A549 (cell line): ENCODE measurements at regions of chr1 and their contacts with region 1.

Region 1: DNA sequence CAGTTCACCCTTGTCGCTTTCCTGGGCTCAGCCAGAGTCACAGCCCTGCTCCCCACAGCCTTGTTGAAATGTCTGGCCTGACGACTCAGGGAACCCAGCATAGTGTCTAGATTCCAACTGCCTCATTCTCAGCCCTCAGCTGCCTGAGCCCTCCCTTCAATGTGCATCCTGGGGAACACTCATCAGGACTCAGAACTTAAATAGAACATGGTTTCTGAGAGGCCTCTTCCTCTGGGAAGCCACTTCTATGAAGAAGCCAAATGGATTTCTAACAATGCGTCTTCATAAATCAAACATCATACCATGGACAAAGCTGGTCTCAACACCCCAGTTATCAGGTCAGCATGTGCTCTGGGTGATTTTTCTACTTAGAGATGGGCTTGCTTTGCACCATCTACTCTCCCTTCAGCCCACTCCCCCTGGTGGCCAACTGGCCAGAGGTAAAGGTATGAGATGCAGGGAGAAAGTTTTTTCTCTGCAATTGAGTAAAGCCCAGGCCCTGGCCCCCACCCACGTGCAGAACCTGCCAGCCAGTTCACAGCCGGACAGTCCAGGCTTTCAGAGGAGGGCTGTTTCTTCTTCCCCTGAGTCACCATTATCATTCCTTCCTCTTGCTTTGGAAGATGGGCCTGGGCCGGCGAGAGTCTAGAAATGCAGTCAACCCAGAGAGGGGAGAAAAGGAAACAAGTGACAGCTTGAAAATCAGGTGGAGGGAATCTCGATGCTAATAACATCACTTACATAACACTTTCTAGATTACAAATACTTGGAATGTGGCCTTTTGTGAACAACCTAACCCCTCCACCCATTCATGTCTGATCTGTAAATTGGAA is 32.1 kb downstream of the CD244 start:
- DNase-seq: peak; percentile 47 to 73
- ATAC-seq: peak; percentile 86 to 89
- H3K4me3 ChIP-seq: no peak overlapping the region
- H3K27ac ChIP-seq: peak overlapping the region in 1 of 2 experiments; percentile 47; a peak in 2 of 6 replicates
- H3K4me1 ChIP-seq: peaks cover 25% of the 10 kb centered on the region
- CTCF ChIP-seq: peak; percentile 82
- EP300 ChIP-seq: no peak
- POLR2A ChIP-seq: no peak
- RAD21 ChIP-seq: peak; percentile 73 to 77

Region 2: DNA sequence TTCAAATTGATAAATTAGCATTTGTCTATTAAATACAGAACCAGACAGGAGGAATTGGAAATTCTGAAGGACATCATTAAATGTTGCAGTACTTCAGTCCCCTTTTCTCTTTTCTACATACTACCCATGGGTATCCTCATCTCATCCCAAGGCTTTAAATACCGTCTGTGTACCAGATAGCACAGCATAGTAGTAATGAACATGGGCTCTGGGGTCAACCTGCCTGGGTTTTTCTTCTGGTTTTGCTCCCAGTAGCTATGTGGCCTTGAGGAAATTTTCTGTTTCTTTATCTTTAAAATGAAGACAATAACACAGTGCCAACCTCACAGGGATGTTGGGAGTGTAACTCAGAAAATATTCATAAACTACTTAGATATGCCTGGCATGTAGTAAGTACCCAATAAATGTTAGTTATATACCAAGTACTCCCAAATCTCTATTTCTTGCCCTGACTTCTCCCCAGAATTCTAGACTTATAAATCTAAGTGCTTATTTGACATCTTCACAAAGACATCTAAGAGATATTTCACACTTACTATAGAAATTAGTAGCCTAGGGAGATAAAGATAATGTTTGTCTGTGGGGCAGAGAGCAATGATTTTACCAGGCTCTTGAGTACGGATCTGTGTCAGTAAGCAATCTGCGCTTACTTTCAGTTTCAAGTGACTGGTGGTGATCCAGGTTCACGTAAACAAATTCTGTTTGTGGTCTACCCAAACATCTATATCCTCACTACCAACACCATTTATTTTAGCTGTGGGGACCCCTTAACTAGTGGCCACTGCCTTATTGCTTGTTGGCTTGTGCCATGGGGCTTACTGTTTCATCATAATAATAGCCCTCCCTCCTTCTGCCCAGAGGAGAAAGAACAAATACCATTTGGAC is 392.9 kb before region 1 on chr1:
- CTCF ChIA-PET with region 1: no interaction called
- POLR2A ChIA-PET with region 1: no interaction called
- DNase-seq: no peak
- ATAC-seq: no peak
- H3K4me3 ChIP-seq: no peak overlapping the region
- H3K27ac ChIP-seq: no peak overlapping the region
- H3K4me1 ChIP-seq: no peaks in the 10 kb centered on the region
- CTCF ChIP-seq: no peak
- EP300 ChIP-seq: no peak
- POLR2A ChIP-seq: no peak
- RAD21 ChIP-seq: no peak

Region 3: GRCh38 chr1:160681067-160681890 is 149.3 kb before region 1 on chr1:
- CTCF ChIA-PET with region 1: interaction called, 21 read pairs
- POLR2A ChIA-PET with region 1: no interaction called
- DNase-seq: peak; percentile 43 to 84
- ATAC-seq: peak; percentile 78 to 97
- H3K4me3 ChIP-seq: no peak overlapping the region
- H3K27ac ChIP-seq: no peak overlapping the region
- H3K4me1 ChIP-seq: no peaks in the 10 kb centered on the region
- CTCF ChIP-seq: peak; percentile 51
- EP300 ChIP-seq: no peak
- POLR2A ChIP-seq: no peak
- RAD21 ChIP-seq: peak; percentile 56 to 79

Region 4: GRCh38 chr1:160726498-160727315 is 103.8 kb before region 1 on chr1:
- CTCF ChIA-PET with region 1: interaction called, 48 read pairs
- POLR2A ChIA-PET with region 1: no interaction called
- DNase-seq: peak; percentile 81 to 86
- ATAC-seq: peak; percentile 89 to 94
- H3K4me3 ChIP-seq: no peak overlapping the region
- H3K27ac ChIP-seq: peak overlapping the region; percentile 26 to 68; a peak in 5 of 6 replicates
- H3K4me1 ChIP-seq: peaks cover 14% of the 10 kb centered on the region
- CTCF ChIP-seq: peak; percentile 91
- EP300 ChIP-seq: no peak
- POLR2A ChIP-seq: no peak
- RAD21 ChIP-seq: peak; percentile 92 to 94

Region 5: DNA sequence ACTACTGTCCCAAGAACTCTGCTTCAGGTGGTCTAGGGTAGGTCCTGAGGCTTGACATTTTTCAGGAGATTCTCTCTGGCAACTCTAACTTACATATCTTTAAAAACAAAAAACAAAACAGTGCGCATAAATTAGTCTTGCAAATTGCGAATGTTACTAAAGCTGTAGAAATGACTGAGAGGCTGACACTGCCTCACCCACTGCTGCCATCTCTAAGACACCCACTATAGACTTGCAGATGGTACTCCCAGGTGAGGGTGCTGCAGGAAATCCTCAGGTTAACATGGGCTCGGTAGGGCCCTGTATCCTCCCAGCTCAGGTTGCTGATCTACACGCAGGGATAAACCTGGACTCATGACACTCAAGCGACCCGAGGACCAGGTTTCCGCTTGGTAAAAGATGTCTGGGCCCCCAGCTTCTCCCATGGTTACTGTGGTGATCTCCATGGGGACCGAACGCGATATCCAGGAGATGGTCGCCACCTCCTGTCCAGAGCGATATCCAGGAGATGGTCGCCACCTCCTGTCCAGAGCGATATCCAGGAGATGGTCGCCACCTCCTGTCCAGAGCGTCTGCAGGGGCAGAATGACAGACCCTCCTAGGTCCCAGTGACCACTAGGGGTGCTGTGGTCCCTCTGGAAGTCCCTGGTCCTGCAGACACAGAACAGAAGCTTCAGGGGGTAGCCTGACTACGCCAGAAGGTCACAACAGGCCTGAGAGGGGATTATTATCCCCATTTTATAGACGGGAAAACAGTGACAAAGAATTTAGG is 50.7 kb before region 1 on chr1:
- CTCF ChIA-PET with region 1: interaction called, 13 read pairs
- POLR2A ChIA-PET with region 1: no interaction called
- DNase-seq: peak; percentile 50 to 70
- ATAC-seq: peak; percentile 73 to 95; a peak in 5 of 6 replicates
- H3K4me3 ChIP-seq: no peak overlapping the region
- H3K27ac ChIP-seq: no peak overlapping the region
- H3K4me1 ChIP-seq: no peaks in the 10 kb centered on the region
- CTCF ChIP-seq: peak; percentile 57
- EP300 ChIP-seq: no peak
- POLR2A ChIP-seq: no peak
- RAD21 ChIP-seq: peak; percentile 55 to 78

Region 6: DNA sequence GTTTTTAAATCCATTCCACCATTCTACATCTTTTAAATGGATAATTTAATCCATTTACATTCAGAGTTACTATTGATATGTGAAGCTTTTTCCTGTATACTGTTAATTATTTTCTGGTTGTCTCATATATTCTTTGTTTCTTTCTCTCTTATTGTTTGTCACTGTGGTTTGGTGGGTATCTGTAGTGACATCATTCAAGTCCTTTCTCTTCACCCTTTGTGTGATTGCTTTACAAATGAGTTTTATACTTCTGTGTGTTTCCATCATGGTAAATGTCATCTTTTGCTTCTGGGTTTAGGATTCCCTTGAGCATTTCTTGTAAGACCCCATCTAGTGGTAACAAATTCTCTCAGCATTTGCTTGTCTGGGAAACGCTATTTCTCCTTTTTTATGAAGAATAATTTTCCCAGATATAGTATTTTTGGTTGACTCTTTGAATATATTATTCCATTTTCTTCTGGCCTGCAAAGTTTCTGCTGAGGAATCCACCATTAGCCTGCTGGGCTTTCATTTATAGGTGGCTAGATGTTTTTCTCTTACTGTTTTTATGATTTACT is 24.4 kb before region 1 on chr1:
- CTCF ChIA-PET with region 1: no interaction called
- POLR2A ChIA-PET with region 1: no interaction called
- DNase-seq: no peak
- ATAC-seq: no peak
- H3K4me3 ChIP-seq: no peak overlapping the region
- H3K27ac ChIP-seq: no peak overlapping the region
- H3K4me1 ChIP-seq: no peaks in the 10 kb centered on the region
- CTCF ChIP-seq: no peak
- EP300 ChIP-seq: no peak
- POLR2A ChIP-seq: no peak
- RAD21 ChIP-seq: no peak

Region 7: DNA sequence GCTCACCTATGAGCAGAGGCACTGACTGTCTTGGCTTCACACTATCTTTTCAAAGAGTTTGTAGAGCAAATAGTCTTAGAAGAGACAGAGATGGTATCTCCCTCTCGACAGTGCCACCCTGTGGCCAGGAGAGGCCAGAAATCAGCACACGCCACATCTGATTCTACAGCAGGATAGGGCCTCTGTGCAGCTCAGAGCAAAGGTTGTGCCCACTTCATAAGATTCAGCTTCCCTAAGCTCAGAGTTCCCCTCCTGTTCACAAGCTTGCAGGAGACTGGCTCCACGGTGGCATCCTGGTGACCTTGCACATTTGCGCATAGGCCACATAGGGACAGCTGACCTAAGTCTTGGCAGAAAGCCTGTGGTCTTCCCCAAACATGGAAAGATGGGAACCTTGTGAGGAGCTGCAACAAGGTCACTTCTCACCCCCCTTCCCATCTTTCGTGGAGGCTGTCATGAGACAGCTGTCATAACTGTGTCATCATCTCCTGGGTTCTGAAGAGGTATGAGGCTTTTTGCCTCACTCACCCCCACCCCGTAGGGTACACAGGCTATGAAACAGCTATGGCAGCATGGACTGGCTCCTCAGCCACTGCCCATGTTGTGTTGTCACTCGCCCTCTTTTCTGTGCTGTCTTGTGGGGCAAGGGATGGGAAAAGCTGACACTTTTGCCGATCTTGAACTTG is 121.0 kb after region 1 on chr1:
- CTCF ChIA-PET with region 1: interaction called, 149 read pairs
- POLR2A ChIA-PET with region 1: no interaction called
- DNase-seq: peak; percentile 70 to 71
- ATAC-seq: peak; percentile 86 to 90
- H3K4me3 ChIP-seq: no peak overlapping the region
- H3K27ac ChIP-seq: peak overlapping the region in 1 of 2 experiments; percentile 24; a peak in 1 of 6 replicates
- H3K4me1 ChIP-seq: peaks cover 50% of the 10 kb centered on the region
- CTCF ChIP-seq: peak; percentile 73
- EP300 ChIP-seq: no peak
- POLR2A ChIP-seq: no peak
- RAD21 ChIP-seq: peak; percentile 74 to 79